Activated naive CD4-positive, alpha-beta T cell treated with anti-CD3 and anti-CD28 coated beads for 36 hours (primary cell): ENCODE measurements at regions of chr2 and their contacts with region 1.

Region 1: GRCh38 chr2:105576440-105577252 is 168.1 kb upstream of the NCK2 start:
- DNase-seq: no peak
- H3K4me3 Mint-ChIP-seq: no peak overlapping the region
- H3K27ac Mint-ChIP-seq: peak overlapping the region; percentile 71
- H3K4me1 Mint-ChIP-seq: peaks cover 16% of the 10 kb centered on the region
- H3K27me3 Mint-ChIP-seq: no peaks in the 10 kb centered on the region

Region 2: GRCh38 chr2:105553538-105554196 is 23.0 kb before region 1 on chr2:
- CTCF ChIA-PET with region 1: no interaction called
- intact Hi-C with region 1: loop called (anchors 2 kb)
- DNase-seq: no peak
- H3K4me3 Mint-ChIP-seq: no peak overlapping the region
- H3K27ac Mint-ChIP-seq: no peak overlapping the region
- H3K4me1 Mint-ChIP-seq: no peaks in the 10 kb centered on the region
- H3K27me3 Mint-ChIP-seq: no peaks in the 10 kb centered on the region

Region 3: DNA sequence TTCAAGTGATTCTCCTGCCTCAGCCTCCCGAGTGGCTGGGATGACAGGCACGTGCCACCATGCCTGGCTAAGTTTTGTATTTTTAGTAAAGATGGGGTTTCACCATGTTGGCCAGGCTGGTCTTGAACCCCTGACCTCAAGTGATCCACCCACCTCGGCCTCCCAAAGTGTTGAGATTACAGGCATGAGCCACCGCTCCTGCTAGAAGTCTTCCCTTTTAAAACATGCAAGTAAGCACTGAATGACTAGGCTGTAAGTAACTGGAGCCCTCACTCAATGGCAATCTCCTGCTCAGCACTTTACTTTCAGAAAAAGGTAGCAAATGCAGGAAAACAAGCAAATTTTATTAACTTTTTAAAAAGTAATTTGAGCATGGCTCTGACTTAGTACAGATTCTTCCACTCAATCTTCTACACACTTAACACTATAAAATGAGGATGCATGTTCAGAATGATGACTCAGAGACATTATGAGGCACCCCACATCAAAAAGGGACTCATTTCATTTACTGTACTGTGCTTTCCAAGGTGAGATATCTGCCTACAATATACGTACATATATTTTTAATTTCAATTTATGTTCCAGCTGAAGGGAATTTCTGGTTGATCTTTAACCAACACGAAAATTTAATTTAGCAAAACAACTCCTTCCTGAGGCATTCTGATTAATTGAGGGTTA is 161.5 kb after region 1 on chr2:
- CTCF ChIA-PET with region 1: interaction called, 3 read pairs
- intact Hi-C with region 1: loop called (anchors 1 kb)
- DNase-seq: peak; percentile 45
- H3K4me3 Mint-ChIP-seq: peak overlapping the region; percentile 69
- H3K27ac Mint-ChIP-seq: peak overlapping the region; percentile 97
- H3K4me1 Mint-ChIP-seq: peaks cover 71% of the 10 kb centered on the region
- H3K27me3 Mint-ChIP-seq: no peaks in the 10 kb centered on the region

Region 4: GRCh38 chr2:105888625-105889400 is 312.2 kb after region 1 on chr2:
- CTCF ChIA-PET with region 1: interaction called, 3 read pairs
- intact Hi-C with region 1: loop called (anchors 1 kb)
- DNase-seq: peak; percentile 69
- H3K4me3 Mint-ChIP-seq: no peak overlapping the region
- H3K27ac Mint-ChIP-seq: peak overlapping the region; percentile 15
- H3K4me1 Mint-ChIP-seq: peaks cover 61% of the 10 kb centered on the region
- H3K27me3 Mint-ChIP-seq: no peaks in the 10 kb centered on the region

Region 5: GRCh38 chr2:106098081-106098480 is 521.4 kb after region 1 on chr2:
- CTCF ChIA-PET with region 1: interaction called, 4 read pairs
- intact Hi-C with region 1: loop called (anchors 1 kb)
- DNase-seq: peak; percentile 53
- H3K4me3 Mint-ChIP-seq: no peak overlapping the region
- H3K27ac Mint-ChIP-seq: no peak overlapping the region
- H3K4me1 Mint-ChIP-seq: peaks cover 40% of the 10 kb centered on the region
- H3K27me3 Mint-ChIP-seq: no peaks in the 10 kb centered on the region